ENCODE measurements at regions of chr14 and their contacts with region 1.

Region 1: DNA sequence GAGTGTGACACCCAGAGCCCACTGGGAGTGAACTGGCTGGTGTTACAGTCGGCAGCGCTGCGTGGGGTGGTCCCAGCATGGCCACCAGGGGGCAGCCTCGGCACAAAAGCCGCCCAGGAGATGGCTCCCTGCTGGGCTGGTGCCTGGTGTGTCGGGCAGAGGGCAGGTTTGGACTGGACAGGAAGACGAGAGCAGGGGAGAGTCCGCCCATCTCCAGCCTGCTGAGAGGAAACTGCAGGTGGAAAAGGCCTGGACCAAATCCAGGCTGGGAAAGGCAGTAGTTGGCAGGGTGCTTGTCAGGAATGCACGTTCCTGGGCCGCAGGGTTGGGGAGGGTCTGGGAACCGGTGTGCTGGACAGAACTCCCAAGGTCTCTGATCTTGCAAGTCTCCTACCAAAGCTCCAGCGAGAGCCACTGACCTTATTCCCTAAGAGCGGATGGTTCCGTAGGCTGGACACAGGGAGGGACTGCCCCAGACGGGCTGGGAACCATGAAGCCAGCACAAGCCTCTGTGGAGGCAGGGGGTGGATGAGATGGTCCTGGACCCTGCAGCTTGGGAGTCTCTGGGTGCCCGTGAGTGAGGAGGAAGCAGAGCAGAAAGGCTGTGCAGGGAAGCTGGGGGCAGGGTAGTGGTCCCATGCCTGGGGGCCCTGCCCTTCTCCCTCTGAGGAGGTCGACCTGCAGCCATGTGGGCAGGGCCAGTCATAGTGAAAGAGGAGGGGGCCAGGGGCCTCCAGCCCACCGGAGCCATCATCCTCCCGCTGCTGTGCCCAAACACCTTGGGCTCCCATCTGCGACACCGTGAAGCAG is 1.8 kb downstream of the AHNAK2 start:
- DNase-seq: peak; percentile 92
- H3K4me3 ChIP-seq: peak overlapping the region; percentile 71 to 81
- H3K27ac ChIP-seq: no peak overlapping the region
- H3K4me1 ChIP-seq: peaks cover 41 to 68% of the 10 kb centered on the region in 2 experiments; a peak in 3 of 4 replicates
- H3K27me3 ChIP-seq: no peaks in the 10 kb centered on the region
- CTCF ChIP-seq: peak; percentile 80
- EP300 ChIP-seq: no peak
- RAD21 ChIP-seq: peak; percentile 92

Region 2: DNA sequence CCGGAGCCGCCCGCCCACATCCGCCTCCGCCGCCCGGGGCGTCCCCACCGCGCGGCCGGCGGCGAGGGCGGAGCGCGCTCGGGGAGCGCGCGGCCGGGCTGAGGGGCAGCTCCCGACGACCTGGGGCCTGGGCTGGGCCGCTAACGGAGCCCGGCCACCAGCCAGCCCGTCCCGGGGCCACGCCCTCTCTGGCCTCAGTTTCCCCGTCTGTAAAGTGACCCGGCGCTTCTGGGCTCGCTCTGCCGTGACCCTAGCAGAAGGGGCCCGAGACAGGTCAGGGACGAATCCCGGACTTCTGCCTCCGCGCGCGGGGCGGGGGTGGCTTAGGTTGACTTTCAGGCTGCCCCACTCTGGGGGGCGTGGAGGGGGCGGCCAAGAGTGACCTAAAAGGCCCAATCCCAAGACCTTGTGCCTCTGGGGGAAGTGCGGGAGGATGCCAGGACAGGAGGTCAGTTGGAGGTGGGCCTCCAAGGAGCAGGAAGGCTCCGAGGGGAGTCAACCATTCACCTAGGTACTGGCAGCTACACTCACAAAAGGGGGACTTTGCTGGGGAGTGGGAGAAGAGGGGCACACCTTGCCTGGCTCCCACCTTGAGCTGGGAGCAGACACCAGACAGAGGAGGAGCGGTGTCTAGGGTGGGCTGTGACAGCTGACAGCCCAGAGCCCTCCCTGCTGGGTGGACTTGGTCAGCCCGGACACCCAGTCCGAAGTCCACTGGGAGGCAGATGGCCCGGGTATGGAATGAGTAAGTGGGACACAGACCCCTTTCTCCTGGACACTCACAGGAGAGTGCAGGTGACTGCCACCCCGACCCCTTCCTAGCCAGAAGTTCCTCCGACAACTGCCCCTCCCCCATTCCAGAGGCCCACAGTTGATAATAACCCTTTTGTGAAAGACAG is 180.4 kb before region 1 on chr14:
- CTCF ChIA-PET with region 1: no interaction called
- POLR2A ChIA-PET with region 1: no interaction called
- DNase-seq: peak; percentile 94
- H3K4me3 ChIP-seq: peak overlapping the region; percentile 55 to 79
- H3K27ac ChIP-seq: peak overlapping the region in 1 of 2 experiments; percentile 67; a peak in 1 of 4 replicates
- H3K4me1 ChIP-seq: peaks cover 8 to 48% of the 10 kb centered on the region in 2 experiments; a peak in 3 of 4 replicates
- H3K27me3 ChIP-seq: no peaks in the 10 kb centered on the region
- CTCF ChIP-seq: no peak
- EP300 ChIP-seq: no peak
- RAD21 ChIP-seq: no peak

Region 3: DNA sequence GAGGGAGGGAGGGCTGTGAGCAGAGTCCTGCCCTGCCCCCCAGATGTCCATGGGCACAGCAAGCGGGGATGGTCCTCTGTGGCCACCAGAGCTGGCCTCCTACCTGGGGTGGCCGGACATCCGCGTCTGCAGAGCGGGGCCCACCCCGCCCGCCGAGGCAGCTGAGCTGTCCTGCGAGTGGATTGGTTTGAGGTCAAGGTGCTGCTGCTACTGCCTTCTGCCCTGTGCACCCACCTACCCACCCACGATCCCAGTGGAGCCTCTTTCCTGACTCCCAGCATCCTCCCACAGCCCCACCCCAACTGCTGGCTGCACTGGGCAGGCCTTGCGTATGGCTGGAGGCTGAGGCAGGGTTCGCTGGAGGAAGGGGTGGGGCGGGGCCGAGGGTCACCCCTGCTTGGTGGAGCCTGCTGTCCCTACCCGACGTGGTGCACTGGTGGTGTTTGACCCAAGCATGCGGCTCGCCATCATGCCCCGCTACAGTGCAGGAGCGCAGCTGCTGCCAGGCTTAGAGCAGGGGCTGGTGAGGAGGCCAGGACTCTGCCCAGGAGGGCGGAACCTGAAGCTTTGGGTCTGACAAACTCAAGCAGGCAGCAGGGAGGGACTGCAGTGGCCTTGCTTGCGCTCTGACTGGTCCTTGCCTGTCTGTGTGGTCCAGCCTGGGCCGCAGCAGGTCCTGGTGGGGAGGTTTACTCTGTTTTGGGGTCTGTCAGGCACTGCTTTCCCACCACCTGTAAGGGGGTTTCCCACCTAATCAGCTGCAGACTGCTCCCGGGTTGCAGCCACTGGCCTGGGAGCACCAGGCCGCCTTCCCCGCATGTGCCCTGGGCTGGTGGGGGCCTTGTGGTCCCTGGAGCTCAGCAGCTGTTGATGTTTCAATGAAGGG is 87.7 kb before region 1 on chr14:
- CTCF ChIA-PET with region 1: no interaction called
- POLR2A ChIA-PET with region 1: no interaction called
- DNase-seq: no peak
- H3K4me3 ChIP-seq: no peak overlapping the region
- H3K27ac ChIP-seq: no peak overlapping the region
- H3K4me1 ChIP-seq: no peaks in the 10 kb centered on the region; a peak in 1 of 4 replicates
- H3K27me3 ChIP-seq: no peaks in the 10 kb centered on the region
- CTCF ChIP-seq: no peak
- EP300 ChIP-seq: no peak
- RAD21 ChIP-seq: no peak

Region 4: DNA sequence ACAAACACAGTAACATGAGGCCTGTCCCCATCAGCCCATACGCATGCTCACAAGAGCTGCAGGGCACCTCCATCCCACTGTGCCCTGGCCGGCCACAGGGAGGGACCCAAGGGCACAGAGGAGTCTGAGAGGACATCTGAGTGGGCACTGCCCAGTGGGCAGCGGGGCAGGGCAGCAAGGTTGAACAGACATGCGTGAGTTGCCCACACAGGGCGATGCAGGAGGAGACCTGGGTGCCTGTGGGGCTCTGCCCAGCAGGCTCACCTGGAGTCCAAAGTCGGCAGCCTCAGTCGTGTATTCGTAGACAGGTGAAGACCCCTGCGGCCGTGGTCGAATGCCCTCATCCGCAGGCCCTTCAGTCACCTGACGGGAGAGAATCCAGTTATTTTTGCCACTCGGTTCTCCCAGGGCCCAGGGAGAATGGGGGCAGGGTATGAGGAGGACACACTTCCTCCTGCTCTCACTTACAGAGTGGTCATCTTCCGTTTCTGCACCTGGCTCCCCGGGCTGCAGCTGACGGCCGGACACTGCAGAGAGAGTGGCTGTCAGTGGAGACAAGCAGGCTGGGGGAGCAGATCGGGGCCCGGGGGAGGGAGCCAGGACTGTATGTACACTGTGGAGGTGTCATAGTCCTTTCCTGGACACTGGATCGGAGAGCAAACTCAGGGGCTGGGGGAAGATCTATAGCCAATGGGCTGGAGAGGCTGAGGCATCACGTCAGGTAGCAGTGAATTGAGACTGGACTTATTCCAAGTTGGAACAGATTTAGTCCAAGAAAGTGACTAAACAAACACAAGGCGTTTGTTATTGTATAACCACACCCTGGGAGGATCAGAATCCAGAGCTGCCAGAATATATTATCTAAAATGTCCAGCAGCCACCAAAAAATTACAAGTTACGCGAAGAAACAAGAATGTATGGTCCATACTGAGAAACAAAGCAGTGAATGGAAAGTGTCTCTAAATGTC is 19.0 kb before region 1 on chr14:
- CTCF ChIA-PET with region 1: interaction called, 17 read pairs
- POLR2A ChIA-PET with region 1: no interaction called
- DNase-seq: no peak
- H3K4me3 ChIP-seq: no peak overlapping the region
- H3K27ac ChIP-seq: no peak overlapping the region
- H3K4me1 ChIP-seq: no peaks in the 10 kb centered on the region
- H3K27me3 ChIP-seq: no peaks in the 10 kb centered on the region
- CTCF ChIP-seq: no peak
- EP300 ChIP-seq: no peak
- RAD21 ChIP-seq: no peak

Region 5: GRCh38 chr14:105012171-105012985 is 36.0 kb after region 1 on chr14:
- CTCF ChIA-PET with region 1: interaction called, 13 read pairs
- POLR2A ChIA-PET with region 1: no interaction called
- DNase-seq: peak; percentile 72
- H3K4me3 ChIP-seq: no peak overlapping the region
- H3K27ac ChIP-seq: peak overlapping the region in 1 of 2 experiments; percentile 39; a peak in 1 of 4 replicates
- H3K4me1 ChIP-seq: peaks cover 33 to 47% of the 10 kb centered on the region in 2 experiments
- H3K27me3 ChIP-seq: no peaks in the 10 kb centered on the region
- CTCF ChIP-seq: peak; percentile 67
- EP300 ChIP-seq: no peak
- RAD21 ChIP-seq: peak; percentile 37; the same call in 1 of the 2 replicates

Region 6: GRCh38 chr14:105034314-105035039 is 58.1 kb after region 1 on chr14:
- CTCF ChIA-PET with region 1: interaction called, 18 read pairs
- POLR2A ChIA-PET with region 1: no interaction called
- DNase-seq: no peak
- H3K4me3 ChIP-seq: no peak overlapping the region
- H3K27ac ChIP-seq: no peak overlapping the region
- H3K4me1 ChIP-seq: peaks cover 0 to 9% of the 10 kb centered on the region in 2 experiments; a peak in 1 of 4 replicates
- H3K27me3 ChIP-seq: no peaks in the 10 kb centered on the region
- CTCF ChIP-seq: no peak
- EP300 ChIP-seq: no peak
- RAD21 ChIP-seq: no peak

Region 7: GRCh38 chr14:105065280-105066228 is 89.2 kb after region 1 on chr14 and contains the start of gene GPR132:
- CTCF ChIA-PET with region 1: interaction called, 27 read pairs
- POLR2A ChIA-PET with region 1: no interaction called
- DNase-seq: no peak
- H3K4me3 ChIP-seq: no peak within 1 kb of the TSS
- H3K27ac ChIP-seq: no peak within 1 kb of the TSS
- H3K4me1 ChIP-seq: no peaks in the 10 kb centered on the region; a peak in 1 of 4 replicates
- H3K27me3 ChIP-seq: no peaks in the 10 kb centered on the region
- CTCF ChIP-seq: no peak
- EP300 ChIP-seq: no peak
- RAD21 ChIP-seq: no peak
- polyA plus RNA-seq, gene GPR132: 0.03 TPM in 1 of 2 replicates, not detected in the other

Region 8: GRCh38 chr14:105086833-105087307 is 110.5 kb after region 1 on chr14:
- CTCF ChIA-PET with region 1: interaction called, 11 read pairs
- POLR2A ChIA-PET with region 1: no interaction called
- DNase-seq: peak; percentile 90
- H3K4me3 ChIP-seq: peak overlapping the region; percentile 37 to 38; a peak in 3 of 4 replicates
- H3K27ac ChIP-seq: no peak overlapping the region
- H3K4me1 ChIP-seq: peaks cover 1 to 29% of the 10 kb centered on the region in 2 experiments; a peak in 2 of 4 replicates
- H3K27me3 ChIP-seq: no peaks in the 10 kb centered on the region
- CTCF ChIP-seq: peak; percentile 69
- EP300 ChIP-seq: no peak
- RAD21 ChIP-seq: peak; percentile 58

Region 9: GRCh38 chr14:105337966-105338741 is 361.8 kb after region 1 on chr14:
- CTCF ChIA-PET with region 1: no interaction called
- POLR2A ChIA-PET with region 1: no interaction called
- DNase-seq: no peak
- H3K4me3 ChIP-seq: no peak overlapping the region
- H3K27ac ChIP-seq: no peak overlapping the region; a peak in 1 of 4 replicates
- H3K4me1 ChIP-seq: peaks cover 0 to 45% of the 10 kb centered on the region in 2 experiments; a peak in 1 of 4 replicates
- H3K27me3 ChIP-seq: no peaks in the 10 kb centered on the region
- CTCF ChIP-seq: no peak
- EP300 ChIP-seq: no peak
- RAD21 ChIP-seq: no peak